Right cardiac atrium (tissue), 5 donors: ENCODE measurements at regions of chr9 and their contacts with region 1.

Region 1: DNA sequence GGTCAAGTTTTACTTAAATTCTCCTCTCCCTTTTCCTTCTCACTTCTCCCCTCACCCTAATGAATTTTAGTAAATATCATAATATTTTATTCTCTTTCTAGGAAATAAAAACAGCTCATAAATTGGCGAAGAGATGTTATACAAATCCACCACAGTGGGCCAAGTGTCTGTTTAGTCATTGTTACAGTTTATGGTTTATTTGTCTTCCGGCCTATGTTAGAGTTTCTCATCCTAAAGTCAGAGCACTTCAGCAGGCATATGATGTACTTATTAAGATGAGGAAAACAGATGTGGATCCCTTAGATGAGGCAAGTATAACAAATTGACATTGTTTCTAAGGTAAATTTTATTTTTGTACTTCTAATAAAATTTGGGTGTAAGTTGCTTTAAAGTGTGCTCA is 48.2 kb downstream of the RPS6 start:
- DNase-seq: no peak
- ATAC-seq: no peak
- H3K4me3 ChIP-seq: no peak overlapping the region
- H3K27ac ChIP-seq: no peak overlapping the region
- H3K4me1 ChIP-seq: no peaks in the 10 kb centered on the region
- H3K27me3 ChIP-seq: no peaks in the 10 kb centered on the region

Region 2: DNA sequence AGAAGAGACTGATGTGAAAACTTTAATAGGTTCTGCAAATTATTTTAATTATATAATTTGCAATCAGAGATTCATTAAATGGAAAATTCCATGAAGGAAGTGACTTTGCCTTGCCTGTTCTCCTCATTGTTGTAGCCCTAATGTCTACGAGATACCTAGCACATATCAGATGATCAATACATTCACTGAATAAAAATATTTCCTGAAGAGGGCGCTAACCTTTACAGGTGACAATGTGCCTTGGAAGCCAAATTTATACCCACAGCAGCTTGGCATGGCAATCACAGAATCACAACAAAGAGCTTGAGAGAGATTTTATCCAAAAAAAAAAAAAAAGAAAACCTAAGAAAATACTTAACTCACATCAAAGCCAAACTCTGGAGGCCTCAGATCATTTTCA is 246.6 kb before region 1 on chr9:
- intact Hi-C with region 1: loop called in 1 of 4 experiments (anchors 5 kb)
- DNase-seq: no peak
- ATAC-seq: no peak
- H3K4me3 ChIP-seq: no peak overlapping the region
- H3K27ac ChIP-seq: no peak overlapping the region
- H3K4me1 ChIP-seq: no peaks in the 10 kb centered on the region
- H3K27me3 ChIP-seq: no peaks in the 10 kb centered on the region

Region 3: GRCh38 chr9:19286634-19287200 is 45.2 kb before region 1 on chr9:
- intact Hi-C with region 1: no loop called
- DNase-seq: peak in 1 of 3 donors; percentile 32
- ATAC-seq: peak; percentile 61 to 81
- H3K4me3 ChIP-seq: no peak overlapping the region
- H3K27ac ChIP-seq: no peak overlapping the region
- H3K4me1 ChIP-seq: peaks cover 5% of the 10 kb centered on the region
- H3K27me3 ChIP-seq: no peaks in the 10 kb centered on the region

Region 4: DNA sequence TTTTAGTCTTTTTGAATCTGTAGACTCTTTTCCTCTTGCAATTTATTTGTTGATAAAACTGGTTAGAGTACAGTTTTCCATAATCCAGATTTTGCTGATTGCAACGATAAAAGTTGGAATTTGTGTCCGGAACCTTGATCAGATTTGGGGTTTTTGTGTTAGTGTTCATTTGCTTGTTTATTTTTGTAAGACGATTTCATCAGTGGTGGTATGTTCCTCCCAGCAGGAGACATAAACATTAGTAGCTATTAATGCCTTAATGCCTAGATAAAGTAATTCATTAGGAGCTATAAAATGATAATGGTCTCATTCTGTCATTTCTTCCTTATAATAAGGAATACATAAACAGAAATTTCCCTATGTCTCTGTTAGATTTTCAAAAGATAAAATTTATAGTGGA is 26.8 kb after region 1 on chr9:
- intact Hi-C with region 1: no loop called
- DNase-seq: no peak
- ATAC-seq: no peak
- H3K4me3 ChIP-seq: no peak overlapping the region
- H3K27ac ChIP-seq: no peak overlapping the region
- H3K4me1 ChIP-seq: no peaks in the 10 kb centered on the region
- H3K27me3 ChIP-seq: no peaks in the 10 kb centered on the region

Region 5: GRCh38 chr9:19369107-19369506 is 37.2 kb after region 1 on chr9:
- intact Hi-C with region 1: loop called in 1 of 4 experiments (anchors 5 kb)
- DNase-seq: no peak
- ATAC-seq: no peak
- H3K4me3 ChIP-seq: no peak overlapping the region
- H3K27ac ChIP-seq: no peak overlapping the region
- H3K4me1 ChIP-seq: no peaks in the 10 kb centered on the region
- H3K27me3 ChIP-seq: no peaks in the 10 kb centered on the region

Region 6: GRCh38 chr9:19379697-19380046 is 47.8 kb after region 1 on chr9:
- intact Hi-C with region 1: no loop called
- DNase-seq: peak in 2 of 3 donors; percentile 53 to 75
- ATAC-seq: peak; percentile 59 to 68
- H3K4me3 ChIP-seq: peak overlapping the region; percentile 76
- H3K27ac ChIP-seq: peak overlapping the region; percentile 78
- H3K4me1 ChIP-seq: no peaks in the 10 kb centered on the region
- H3K27me3 ChIP-seq: no peaks in the 10 kb centered on the region